Transverse colon (tissue), 4 donors: ENCODE measurements at regions of chr16 and their contacts with region 1.

Region 1: DNA sequence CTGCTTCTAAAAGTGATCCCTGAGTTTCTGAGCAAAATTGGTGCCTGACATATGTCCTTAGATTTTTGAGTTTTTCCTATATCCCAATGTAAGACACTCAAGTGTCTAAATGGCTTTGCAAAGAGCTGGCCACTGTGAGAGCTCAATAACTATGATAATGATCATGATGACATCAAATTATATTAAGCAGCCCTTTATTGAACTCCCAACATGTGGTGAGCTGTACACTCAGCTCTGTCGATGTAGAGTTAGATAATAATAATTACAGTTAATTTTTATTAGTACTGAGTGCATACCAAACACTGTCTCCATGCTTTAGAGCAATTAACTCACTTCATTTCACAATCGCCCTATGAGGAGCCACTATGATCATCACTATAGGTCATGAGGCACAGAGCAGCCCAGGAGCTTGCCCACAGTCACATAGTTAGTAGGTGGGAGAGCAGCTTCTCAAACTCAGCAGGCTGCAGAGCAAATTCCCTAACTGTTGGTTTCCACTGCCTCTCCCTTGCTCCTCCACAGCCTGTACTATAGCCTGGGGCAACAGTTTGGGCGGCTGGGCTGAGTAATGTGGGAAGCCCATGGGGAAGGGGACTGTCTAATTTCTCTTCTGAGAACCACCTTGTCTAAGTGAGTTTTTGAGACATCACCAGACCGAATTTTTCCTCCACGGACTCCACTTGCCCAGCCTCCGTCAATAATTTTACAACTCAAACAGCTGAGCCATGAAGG is 73.2 kb upstream of the GPR139 start:
- DNase-seq: no peak
- H3K4me3 ChIP-seq: no peak overlapping the region
- H3K27ac ChIP-seq: no peak overlapping the region
- H3K4me1 ChIP-seq: no peaks in the 10 kb centered on the region
- H3K27me3 ChIP-seq: no peaks in the 10 kb centered on the region
- CTCF ChIP-seq: no peak
- EP300 ChIP-seq: no peak
- POLR2A ChIP-seq: no peak

Region 2: GRCh38 chr16:20004932-20005331 is 142.0 kb before region 1 on chr16:
- in situ Hi-C with region 1: no loop called
- intact Hi-C with region 1: no loop called
- DNase-seq: no peak
- H3K4me3 ChIP-seq: no peak overlapping the region
- H3K27ac ChIP-seq: no peak overlapping the region
- H3K4me1 ChIP-seq: peaks cover 0 to 8% (median 0%) of the 10 kb centered on the region in 4 donors
- H3K27me3 ChIP-seq: no peaks in the 10 kb centered on the region
- CTCF ChIP-seq: no peak
- EP300 ChIP-seq: no peak
- POLR2A ChIP-seq: no peak

Region 3: DNA sequence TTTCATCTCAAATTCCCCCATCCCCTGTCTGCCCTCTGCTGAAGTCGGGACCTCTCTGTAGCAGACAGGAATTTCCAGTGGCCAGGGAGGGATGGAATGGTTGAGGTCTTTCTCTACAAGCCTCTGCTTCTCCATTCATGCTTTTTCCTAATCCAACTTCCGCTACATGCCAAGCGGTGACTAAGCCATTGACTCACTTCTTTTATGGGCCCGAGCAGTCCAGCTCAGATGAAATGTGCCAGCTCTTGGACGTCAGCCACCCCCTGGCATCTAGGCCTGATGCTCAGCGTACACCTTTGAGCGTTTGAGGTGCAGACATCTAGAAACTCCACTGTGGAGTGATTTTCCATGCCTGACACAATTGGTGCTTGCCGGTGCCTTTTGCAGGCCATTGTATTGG is 32.6 kb before region 1 on chr16:
- in situ Hi-C with region 1: no loop called
- intact Hi-C with region 1: loop called (anchors 1 kb)
- DNase-seq: peak; percentile 25
- H3K4me3 ChIP-seq: no peak overlapping the region
- H3K27ac ChIP-seq: no peak overlapping the region
- H3K4me1 ChIP-seq: no peaks in the 10 kb centered on the region
- H3K27me3 ChIP-seq: no peaks in the 10 kb centered on the region
- CTCF ChIP-seq: no peak
- EP300 ChIP-seq: no peak
- POLR2A ChIP-seq: no peak

Region 4: GRCh38 chr16:20191566-20191965 is 44.6 kb after region 1 on chr16:
- in situ Hi-C with region 1: loop called in 1 of 4 experiments (anchors 10 kb)
- intact Hi-C with region 1: no loop called
- DNase-seq: no peak
- H3K4me3 ChIP-seq: no peak overlapping the region
- H3K27ac ChIP-seq: no peak overlapping the region
- H3K4me1 ChIP-seq: no peaks in the 10 kb centered on the region
- H3K27me3 ChIP-seq: no peaks in the 10 kb centered on the region
- CTCF ChIP-seq: no peak
- EP300 ChIP-seq: no peak
- POLR2A ChIP-seq: no peak

Region 5: DNA sequence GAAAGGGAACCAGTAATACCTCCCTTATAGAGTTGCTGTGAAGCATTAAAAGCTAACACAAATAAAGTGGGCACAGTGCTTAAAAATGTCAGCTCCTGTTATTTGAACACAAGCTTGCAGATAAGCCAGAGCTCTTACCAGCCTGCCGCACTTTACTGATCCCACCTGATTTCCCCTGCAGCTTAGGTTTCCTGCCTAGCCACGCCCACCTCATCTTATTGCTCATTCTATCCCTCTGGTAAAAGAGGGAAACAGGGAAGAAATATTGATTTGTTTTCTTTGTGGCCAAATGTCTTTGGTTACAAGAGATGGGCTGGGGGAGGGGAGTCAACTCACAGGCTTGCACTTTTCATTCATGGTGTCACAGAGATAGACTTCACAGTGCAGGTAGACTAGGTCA is 190.0 kb after region 1 on chr16:
- in situ Hi-C with region 1: no loop called
- intact Hi-C with region 1: no loop called
- DNase-seq: no peak
- H3K4me3 ChIP-seq: no peak overlapping the region
- H3K27ac ChIP-seq: no peak overlapping the region
- H3K4me1 ChIP-seq: no peaks in the 10 kb centered on the region
- H3K27me3 ChIP-seq: no peaks in the 10 kb centered on the region
- CTCF ChIP-seq: no peak
- EP300 ChIP-seq: no peak
- POLR2A ChIP-seq: no peak